ENCODE measurements at regions of chr9 and their contacts with region 1.

Region 1: DNA sequence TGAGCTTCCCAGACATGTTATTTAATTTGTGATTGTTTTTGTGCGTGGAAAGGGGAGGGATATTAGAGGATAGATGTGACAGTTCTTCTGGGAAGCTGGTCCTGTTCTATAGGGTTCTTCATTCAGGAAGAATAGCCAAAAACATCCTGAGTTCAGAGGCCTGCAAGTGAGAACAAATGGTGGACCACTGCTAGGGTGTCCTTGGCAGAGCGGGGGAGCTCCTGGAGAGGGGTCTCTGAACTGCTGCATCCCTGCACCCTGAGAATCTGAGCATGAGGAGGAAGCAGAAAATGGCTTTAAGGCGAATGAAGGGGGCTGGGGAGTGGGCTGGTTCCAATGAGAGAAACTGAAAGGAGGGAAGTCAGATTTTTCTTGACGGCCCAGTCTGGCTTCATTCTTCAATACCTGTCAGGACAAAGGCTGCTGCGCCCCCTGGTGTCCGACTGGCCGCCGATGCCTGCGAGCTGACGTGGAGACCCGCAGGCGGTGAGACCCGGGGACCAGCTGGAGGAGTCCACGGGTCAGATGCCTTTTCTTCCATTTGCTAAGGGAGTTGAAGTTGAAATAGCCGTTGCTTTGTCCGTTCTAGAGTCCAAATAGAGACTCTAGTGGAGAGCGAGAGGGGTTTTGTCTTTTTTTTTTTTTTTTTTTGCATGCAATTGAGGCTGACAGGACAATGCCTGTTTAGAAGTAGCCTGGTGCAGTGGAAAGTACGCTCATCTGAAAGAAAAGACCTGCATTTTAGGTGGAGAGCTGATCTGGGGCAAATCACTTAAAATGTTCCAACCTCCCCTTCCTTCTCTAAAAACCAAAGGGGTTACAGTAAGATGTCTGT is 39.5 kb upstream of the NFIB start:
- DNase-seq: peak; percentile 51
- ATAC-seq: peak; percentile 93
- H3K4me3 ChIP-seq: peak overlapping the region in 1 of 3 experiments; percentile 8; a peak in 1 of 6 replicates
- H3K27ac ChIP-seq: no peak overlapping the region
- H3K4me1 ChIP-seq: peaks cover 13% of the 10 kb centered on the region
- H3K27me3 ChIP-seq: peaks cover 0 to 46% of the 10 kb centered on the region in 2 experiments; a peak in 4 of 5 replicates
- CTCF ChIP-seq: peak; percentile 93
- EP300 ChIP-seq: no peak
- POLR2A ChIP-seq: no peak
- RAD21 ChIP-seq: peak; percentile 81

Region 2: GRCh38 chr9:13033959-13034693 is 1319.3 kb before region 1 on chr9:
- CTCF ChIA-PET with region 1: no interaction called
- POLR2A ChIA-PET with region 1: no interaction called
- in situ Hi-C with region 1: loop called (anchors 25 kb)
- intact Hi-C with region 1: loop called (anchors 1 kb)
- DNase-seq: peak; percentile 38
- ATAC-seq: peak; percentile 97
- H3K4me3 ChIP-seq: 0 out of 6 replicates have a peak overlapping the region, but pooled peaks of 1 of the 3 experiments have one; percentile 12
- H3K27ac ChIP-seq: no peak overlapping the region
- H3K4me1 ChIP-seq: peaks cover 12% of the 10 kb centered on the region
- H3K27me3 ChIP-seq: no peaks in the 10 kb centered on the region
- CTCF ChIP-seq: peak; percentile 90
- EP300 ChIP-seq: 0 out of 4 replicates have a peak, but pooled peaks of 1 of the 2 experiments have one; percentile 4
- POLR2A ChIP-seq: no peak
- RAD21 ChIP-seq: peak; percentile 57

Region 3: GRCh38 chr9:13427587-13427986 is 925.9 kb before region 1 on chr9:
- CTCF ChIA-PET with region 1: interaction called, 8 read pairs
- POLR2A ChIA-PET with region 1: no interaction called
- in situ Hi-C with region 1: loop called (anchors 5 kb)
- intact Hi-C with region 1: loop called (anchors 1 kb)
- DNase-seq: peak; percentile 14
- ATAC-seq: no peak
- H3K4me3 ChIP-seq: no peak overlapping the region
- H3K27ac ChIP-seq: no peak overlapping the region
- H3K4me1 ChIP-seq: no peaks in the 10 kb centered on the region
- H3K27me3 ChIP-seq: no peaks in the 10 kb centered on the region
- CTCF ChIP-seq: peak; percentile 49
- EP300 ChIP-seq: no peak
- POLR2A ChIP-seq: no peak
- RAD21 ChIP-seq: no peak

Region 4: DNA sequence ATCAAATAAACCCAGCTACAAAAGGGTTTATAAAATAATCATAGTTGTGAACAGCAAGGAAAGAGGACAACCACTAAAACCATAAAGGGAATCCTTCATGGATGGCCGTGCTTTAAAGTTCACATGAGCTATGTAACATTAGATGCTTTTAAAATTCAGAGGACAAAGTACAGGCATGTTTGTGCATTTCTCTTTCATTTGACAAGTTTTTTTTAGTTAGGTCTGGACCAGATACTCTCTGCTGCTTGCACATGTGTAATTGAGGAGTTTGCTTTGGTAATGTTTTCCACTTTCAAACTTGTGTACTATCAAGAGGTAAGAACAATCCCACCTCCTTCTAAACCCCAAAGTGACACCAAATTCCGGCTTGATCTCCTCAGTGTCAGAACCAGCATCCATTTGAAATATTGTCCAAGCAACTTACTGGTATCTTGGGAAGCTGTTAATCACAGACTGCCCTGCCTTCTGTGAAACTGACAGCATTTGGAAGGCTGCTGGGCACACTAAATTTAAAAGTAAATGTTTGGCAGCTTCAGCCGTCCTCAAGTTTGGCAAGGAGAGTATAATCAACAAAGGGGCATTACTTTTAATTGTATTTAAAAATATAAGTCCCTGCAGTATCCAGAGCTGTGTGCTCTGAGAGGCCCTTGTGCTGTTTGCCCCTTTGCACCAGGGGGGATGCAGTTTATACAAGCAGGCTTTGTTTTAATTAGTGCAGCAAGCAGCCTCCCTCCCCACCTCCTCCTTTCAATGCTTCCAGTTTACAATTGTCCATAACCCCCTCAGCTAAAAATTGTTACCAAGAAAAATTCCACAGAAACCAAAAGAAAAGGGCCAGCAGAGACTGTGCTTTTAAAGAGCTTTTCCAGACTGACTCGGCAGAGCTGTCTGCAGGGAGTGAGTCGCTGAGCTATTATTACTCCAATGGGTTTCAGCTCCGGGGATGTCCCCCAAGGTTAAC is 745.7 kb before region 1 on chr9:
- CTCF ChIA-PET with region 1: no interaction called
- POLR2A ChIA-PET with region 1: no interaction called
- in situ Hi-C with region 1: loop called (anchors 25 kb)
- intact Hi-C with region 1: no loop called
- DNase-seq: no peak
- ATAC-seq: no peak
- H3K4me3 ChIP-seq: no peak overlapping the region
- H3K27ac ChIP-seq: no peak overlapping the region
- H3K4me1 ChIP-seq: no peaks in the 10 kb centered on the region
- H3K27me3 ChIP-seq: no peaks in the 10 kb centered on the region
- CTCF ChIP-seq: no peak
- EP300 ChIP-seq: no peak
- POLR2A ChIP-seq: no peak
- RAD21 ChIP-seq: no peak

Region 5: GRCh38 chr9:13810510-13810909 is 542.9 kb before region 1 on chr9:
- CTCF ChIA-PET with region 1: no interaction called
- POLR2A ChIA-PET with region 1: no interaction called
- in situ Hi-C with region 1: loop called (anchors 25 kb)
- intact Hi-C with region 1: no loop called
- DNase-seq: no peak
- ATAC-seq: no peak
- H3K4me3 ChIP-seq: no peak overlapping the region
- H3K27ac ChIP-seq: no peak overlapping the region
- H3K4me1 ChIP-seq: no peaks in the 10 kb centered on the region
- H3K27me3 ChIP-seq: no peaks in the 10 kb centered on the region
- CTCF ChIP-seq: no peak
- EP300 ChIP-seq: no peak
- POLR2A ChIP-seq: no peak
- RAD21 ChIP-seq: no peak

Region 6: DNA sequence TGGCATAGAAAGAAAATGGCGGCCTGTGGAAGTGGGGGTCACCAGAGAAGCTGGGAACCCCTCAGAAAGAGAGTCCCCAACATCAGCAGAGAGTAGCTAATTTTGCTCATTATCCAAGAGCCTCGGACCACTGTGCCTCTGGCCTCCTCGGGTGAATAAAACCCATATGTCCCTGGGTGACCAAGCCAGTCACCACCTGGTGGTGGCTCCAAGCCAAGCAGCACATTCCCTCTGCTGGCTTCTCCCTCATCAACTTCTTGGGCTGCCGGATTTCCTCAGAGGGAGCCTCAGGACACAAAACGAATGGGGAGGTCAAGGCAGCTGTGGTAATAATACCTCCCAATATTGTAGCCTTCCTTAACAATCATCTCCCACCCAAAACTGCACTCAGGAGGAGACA is 282.0 kb before region 1 on chr9:
- CTCF ChIA-PET with region 1: interaction called, 6 read pairs
- POLR2A ChIA-PET with region 1: no interaction called
- in situ Hi-C with region 1: loop called (anchors 5 kb)
- intact Hi-C with region 1: loop called (anchors 1 kb)
- DNase-seq: no peak
- ATAC-seq: peak; percentile 64
- H3K4me3 ChIP-seq: no peak overlapping the region
- H3K27ac ChIP-seq: no peak overlapping the region
- H3K4me1 ChIP-seq: no peaks in the 10 kb centered on the region
- H3K27me3 ChIP-seq: no peaks in the 10 kb centered on the region
- CTCF ChIP-seq: no peak
- EP300 ChIP-seq: no peak
- POLR2A ChIP-seq: no peak
- RAD21 ChIP-seq: no peak

Region 7: GRCh38 chr9:14322211-14323082 is 31.0 kb before region 1 on chr9:
- CTCF ChIA-PET with region 1: no interaction called
- POLR2A ChIA-PET with region 1: no interaction called
- in situ Hi-C with region 1: no loop called
- intact Hi-C with region 1: loop called (anchors 2 kb)
- DNase-seq: peak; percentile 71
- ATAC-seq: peak; percentile 98
- H3K4me3 ChIP-seq: peak overlapping the region; percentile 56 to 81 (median 76)
- H3K27ac ChIP-seq: peak overlapping the region; percentile 52
- H3K4me1 ChIP-seq: peaks cover 47% of the 10 kb centered on the region
- H3K27me3 ChIP-seq: peaks cover 0 to 6% of the 10 kb centered on the region in 2 experiments; a peak in 2 of 5 replicates
- CTCF ChIP-seq: peak; percentile 64
- EP300 ChIP-seq: no peak
- POLR2A ChIP-seq: no peak
- RAD21 ChIP-seq: peak; percentile 65

Measured in HepG2 (cell line).